A549 (cell line): ENCODE measurements at regions of chr17 and their contacts with region 1.

Region 1: GRCh38 chr17:49694847-49695683 is 12.7 kb downstream of the SLC35B1 start:
- DNase-seq: peak; percentile 33 to 58
- ATAC-seq: peak; percentile 36 to 64; a peak in 4 of 6 replicates
- H3K4me3 ChIP-seq: no peak overlapping the region
- H3K27ac ChIP-seq: no peak overlapping the region
- H3K4me1 ChIP-seq: no peaks in the 10 kb centered on the region
- CTCF ChIP-seq: peak; percentile 98
- EP300 ChIP-seq: no peak
- POLR2A ChIP-seq: no peak
- RAD21 ChIP-seq: peak; percentile 98

Region 2: DNA sequence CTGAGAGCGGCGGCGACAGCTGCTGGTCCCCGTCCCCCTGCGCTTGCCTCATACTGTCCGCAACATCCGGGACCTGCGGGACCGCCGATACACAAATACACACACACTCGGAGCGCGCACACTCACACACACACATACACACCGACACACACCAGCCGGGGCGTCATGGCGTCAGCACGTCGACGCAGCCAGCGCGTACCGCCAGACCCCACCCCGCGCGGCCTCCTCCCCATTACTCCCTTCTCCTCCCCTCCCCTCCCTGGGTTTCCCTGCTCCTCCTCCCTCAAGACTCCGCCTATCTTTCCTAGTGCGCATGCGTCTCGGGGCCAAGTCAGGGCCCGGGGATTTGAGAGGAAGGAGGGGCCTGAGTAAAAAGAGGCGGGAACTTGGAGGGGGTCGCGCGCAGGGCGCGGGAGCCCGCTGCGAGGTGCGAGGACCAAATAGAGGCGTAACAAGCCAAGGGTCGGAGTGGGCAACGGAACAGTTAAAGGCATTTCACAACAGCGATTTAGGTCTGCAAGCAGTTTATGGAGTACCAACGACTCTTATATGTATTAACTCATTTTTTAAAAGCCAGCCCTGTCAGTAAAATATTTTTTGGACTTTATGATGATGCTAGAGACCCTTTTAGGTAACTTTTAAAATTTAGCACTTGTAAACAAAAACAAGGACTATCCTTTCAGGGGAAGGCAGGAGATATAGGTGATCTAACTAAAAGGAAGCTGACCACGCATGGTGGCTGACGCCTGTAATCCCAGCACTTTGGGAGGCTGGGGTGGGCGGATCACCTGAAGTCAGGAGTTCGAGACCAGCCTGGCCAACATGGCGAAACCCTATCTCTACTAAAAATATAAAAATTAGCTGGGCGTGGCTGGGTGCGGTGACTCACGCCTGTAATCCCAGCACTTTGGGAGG is 16.9 kb before region 1 on chr17 and contains the start of gene SPOP:
- CTCF ChIA-PET with region 1: interaction called, 181 read pairs
- POLR2A ChIA-PET with region 1: no interaction called
- DNase-seq: peak; percentile 97 to 100
- ATAC-seq: peak; percentile 93 to 94
- H3K4me3 ChIP-seq: peak within 1 kb of the TSS; percentile 73
- H3K27ac ChIP-seq: peak within 1 kb of the TSS; percentile 93 to 96
- H3K4me1 ChIP-seq: peaks cover 19% of the 10 kb centered on the region
- CTCF ChIP-seq: no peak
- EP300 ChIP-seq: 0 out of 5 replicates have a peak, but pooled peaks of 1 of the 2 experiments have one; percentile 50
- POLR2A ChIP-seq: peak; percentile 50
- RAD21 ChIP-seq: no peak; a peak in 1 of 5 replicates
- polyA plus RNA-seq, gene SPOP: 57.2 and 61.3 TPM in 2 replicates

Region 3: DNA sequence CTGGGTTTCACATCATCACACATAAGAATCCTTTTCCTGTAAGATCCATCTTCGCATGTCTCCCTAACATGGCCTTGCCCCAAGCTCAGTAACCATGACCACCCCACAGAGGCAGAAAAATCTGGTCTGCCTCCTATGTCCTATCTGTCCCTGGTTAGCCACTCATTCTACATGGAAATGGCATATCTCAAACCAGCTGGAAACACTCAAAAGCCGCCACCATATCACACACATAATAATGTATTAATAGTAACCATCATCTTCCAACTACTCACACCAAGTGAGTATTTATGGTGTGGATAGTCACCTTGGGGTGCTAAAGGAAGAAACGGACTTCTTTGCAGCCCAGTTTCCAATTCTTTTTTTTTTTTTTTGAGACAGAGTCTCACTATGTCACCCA is 57.4 kb after region 1 on chr17:
- CTCF ChIA-PET with region 1: interaction called, 17 read pairs
- POLR2A ChIA-PET with region 1: no interaction called
- DNase-seq: no peak
- ATAC-seq: no peak; a peak in 1 of 6 replicates
- H3K4me3 ChIP-seq: no peak overlapping the region
- H3K27ac ChIP-seq: no peak overlapping the region
- H3K4me1 ChIP-seq: no peaks in the 10 kb centered on the region
- CTCF ChIP-seq: no peak
- EP300 ChIP-seq: no peak
- POLR2A ChIP-seq: no peak
- RAD21 ChIP-seq: no peak